ENCODE measurements at regions of chr3 and their contacts with region 1.

Region 1: GRCh38 chr3:183825456-183826161 is at the start of gene MAP6D1:
- DNase-seq: peak in 9 of 14 experiments; percentile 13 to 61 (median 41)
- ATAC-seq: peak; percentile 75
- H3K4me3 ChIP-seq: peak within 1 kb of the TSS; percentile 51
- H3K4me3 Mint-ChIP-seq: peak within 1 kb of the TSS; percentile 85
- H3K27ac ChIP-seq: no peak within 1 kb of the TSS
- H3K27ac Mint-ChIP-seq: peak within 1 kb of the TSS; percentile 39
- H3K4me1 ChIP-seq: peaks cover 12% of the 10 kb centered on the region
- H3K4me1 Mint-ChIP-seq: peaks cover 20% of the 10 kb centered on the region
- H3K27me3 ChIP-seq: peaks cover 0 to 2% of the 10 kb centered on the region in 2 experiments
- H3K27me3 Mint-ChIP-seq: no peaks in the 10 kb centered on the region
- CTCF ChIP-seq: no peak
- total RNA-seq, gene MAP6D1: 1.1 to 1.6 TPM

Region 2: GRCh38 chr3:183775781-183776180 is 49.8 kb before region 1 on chr3:
- CTCF ChIA-PET with region 1: no interaction called
- POLR2A ChIA-PET with region 1: no interaction called
- intact Hi-C with region 1: no loop called
- DNase-seq: no peak
- ATAC-seq: no peak
- H3K4me3 ChIP-seq: no peak overlapping the region
- H3K4me3 Mint-ChIP-seq: no peak overlapping the region
- H3K27ac ChIP-seq: no peak overlapping the region
- H3K27ac Mint-ChIP-seq: no peak overlapping the region
- H3K4me1 ChIP-seq: no peaks in the 10 kb centered on the region
- H3K4me1 Mint-ChIP-seq: no peaks in the 10 kb centered on the region
- H3K27me3 ChIP-seq: no peaks in the 10 kb centered on the region
- H3K27me3 Mint-ChIP-seq: no peaks in the 10 kb centered on the region
- CTCF ChIP-seq: no peak

Region 3: GRCh38 chr3:183815563-183815940 is 10.1 kb before region 1 on chr3:
- CTCF ChIA-PET with region 1: no interaction called
- POLR2A ChIA-PET with region 1: interaction called, 12 read pairs
- intact Hi-C with region 1: no loop called
- DNase-seq: peak in 2 of 14 experiments; percentile 25 to 67
- ATAC-seq: peak; percentile 77
- H3K4me3 ChIP-seq: peak overlapping the region; percentile 17
- H3K4me3 Mint-ChIP-seq: peak overlapping the region; percentile 75
- H3K27ac ChIP-seq: peak overlapping the region in 1 of 2 donors; percentile 72
- H3K27ac Mint-ChIP-seq: peak overlapping the region; percentile 90
- H3K4me1 ChIP-seq: peaks cover 12% of the 10 kb centered on the region
- H3K4me1 Mint-ChIP-seq: peaks cover 19% of the 10 kb centered on the region
- H3K27me3 ChIP-seq: no peaks in the 10 kb centered on the region
- H3K27me3 Mint-ChIP-seq: no peaks in the 10 kb centered on the region
- CTCF ChIP-seq: no peak